Mammary epithelial cell (primary cell): ENCODE measurements at regions of chr10 and their contacts with region 1.

Region 1: GRCh38 chr10:10911471-10911921 is 106.2 kb upstream of the CELF2 start:
- DNase-seq: peak; percentile 77
- H3K4me3 ChIP-seq: peak overlapping the region in 2 of 3 experiments; percentile 12 to 27
- H3K27ac ChIP-seq: no peak overlapping the region
- H3K4me1 ChIP-seq: peaks cover 11% of the 10 kb centered on the region
- H3K27me3 ChIP-seq: no peaks in the 10 kb centered on the region
- CTCF ChIP-seq: no peak

Region 2: DNA sequence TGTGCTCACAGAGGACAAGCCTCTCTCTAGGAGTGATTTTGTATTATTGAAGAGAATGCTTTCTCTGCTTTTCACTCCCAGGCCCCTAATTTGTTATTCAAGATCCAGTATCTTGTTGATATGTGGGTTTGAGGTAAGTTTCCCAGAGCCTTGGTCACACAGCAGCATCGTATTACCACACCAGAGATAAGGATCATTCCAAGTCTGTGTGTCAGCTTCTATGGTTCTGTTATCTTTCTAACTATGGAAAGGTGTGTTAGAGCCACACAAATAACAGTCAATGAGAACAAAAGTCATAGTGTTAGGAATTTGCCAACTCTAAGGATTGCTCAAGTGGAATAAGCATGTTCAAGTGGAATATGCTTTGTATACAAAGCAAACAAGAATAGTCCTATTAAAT is 1648.7 kb before region 1 on chr10:
- CTCF ChIA-PET with region 1: no interaction called
- dilution Hi-C with region 1: no loop called
- in situ Hi-C with region 1: no loop called
- intact Hi-C with region 1: loop called (anchors 5 kb)
- DNase-seq: peak; percentile 8
- H3K4me3 ChIP-seq: no peak overlapping the region
- H3K27ac ChIP-seq: no peak overlapping the region
- H3K4me1 ChIP-seq: no peaks in the 10 kb centered on the region
- H3K27me3 ChIP-seq: peaks cover 3% of the 10 kb centered on the region
- CTCF ChIP-seq: no peak

Region 3: GRCh38 chr10:10786109-10787090 is 125.1 kb before region 1 on chr10:
- CTCF ChIA-PET with region 1: no interaction called
- dilution Hi-C with region 1: no loop called
- in situ Hi-C with region 1: no loop called
- intact Hi-C with region 1: loop called (anchors 2 kb)
- DNase-seq: peak; percentile 71
- H3K4me3 ChIP-seq: no peak overlapping the region
- H3K27ac ChIP-seq: peak overlapping the region; percentile 54
- H3K4me1 ChIP-seq: peaks cover 19% of the 10 kb centered on the region
- H3K27me3 ChIP-seq: no peaks in the 10 kb centered on the region
- CTCF ChIP-seq: no peak

Region 4: DNA sequence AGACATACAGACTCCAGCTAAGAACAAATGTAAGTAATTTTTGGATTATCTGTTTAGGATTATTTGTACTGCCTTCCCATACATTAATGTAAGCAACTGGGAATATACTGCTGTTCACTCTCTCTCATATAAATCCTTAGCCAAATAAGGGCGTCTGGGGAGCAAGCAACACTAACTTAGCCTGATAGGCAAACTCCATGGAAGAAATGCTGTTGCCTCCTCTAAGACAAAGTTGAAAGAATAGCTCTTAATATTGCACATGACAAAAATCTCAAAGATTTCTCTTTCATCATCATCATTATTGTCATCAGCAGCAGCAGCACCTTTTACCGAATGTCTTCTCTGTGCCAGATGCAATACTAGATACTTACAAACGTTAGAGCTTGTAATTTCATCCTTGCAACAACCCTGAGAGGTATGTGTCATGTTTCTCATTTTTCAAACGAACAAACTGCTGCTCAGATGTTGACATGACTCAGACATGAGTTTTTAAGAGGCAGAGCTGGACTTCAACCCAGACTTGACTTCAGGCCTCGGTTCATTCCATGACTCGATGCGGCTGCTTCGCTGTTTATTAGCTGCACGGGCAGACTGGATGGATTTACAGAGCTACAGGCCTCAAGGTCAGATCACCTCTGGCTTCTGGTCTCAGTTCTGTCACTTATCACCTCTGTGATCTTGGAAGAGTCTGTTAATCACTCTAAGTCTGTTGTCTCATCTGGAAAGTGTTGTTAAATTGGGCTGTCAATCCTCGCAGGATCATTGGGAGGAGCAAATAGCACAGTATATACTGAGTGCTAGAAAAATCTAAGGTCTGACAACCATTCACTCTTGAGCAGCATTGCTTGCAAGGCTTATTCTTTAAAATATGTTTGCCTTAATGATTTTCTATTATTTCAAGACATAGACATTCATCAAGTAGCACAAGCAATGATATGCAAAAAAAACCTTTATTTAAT is 20.1 kb before region 1 on chr10:
- CTCF ChIA-PET with region 1: no interaction called
- dilution Hi-C with region 1: no loop called
- in situ Hi-C with region 1: no loop called
- intact Hi-C with region 1: no loop called
- DNase-seq: no peak
- H3K4me3 ChIP-seq: no peak overlapping the region
- H3K27ac ChIP-seq: no peak overlapping the region
- H3K4me1 ChIP-seq: no peaks in the 10 kb centered on the region
- H3K27me3 ChIP-seq: no peaks in the 10 kb centered on the region
- CTCF ChIP-seq: no peak

Region 5: DNA sequence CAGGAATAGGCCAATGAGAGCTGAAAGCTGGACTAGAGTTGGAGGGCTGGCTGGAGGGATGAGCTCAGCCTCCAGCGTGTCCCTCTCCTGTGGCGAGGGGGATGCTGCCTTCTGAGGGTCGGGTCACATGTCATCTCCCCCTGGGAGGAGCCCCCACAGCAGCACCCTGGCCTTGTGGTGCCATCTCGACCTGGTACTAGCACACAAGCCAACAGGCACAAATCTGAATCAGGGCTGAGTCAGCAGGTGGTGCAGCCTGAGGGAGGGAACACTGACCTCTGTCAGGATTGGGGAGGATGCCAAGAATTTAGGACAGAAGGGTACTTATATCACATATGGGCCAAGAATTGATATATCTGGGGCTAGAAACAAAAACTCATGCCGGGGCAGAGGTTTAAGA is 386.6 kb after region 1 on chr10:
- CTCF ChIA-PET with region 1: no interaction called
- dilution Hi-C with region 1: no loop called
- in situ Hi-C with region 1: no loop called
- intact Hi-C with region 1: no loop called
- DNase-seq: peak; percentile 1
- H3K4me3 ChIP-seq: no peak overlapping the region
- H3K27ac ChIP-seq: no peak overlapping the region
- H3K4me1 ChIP-seq: no peaks in the 10 kb centered on the region
- H3K27me3 ChIP-seq: no peaks in the 10 kb centered on the region
- CTCF ChIP-seq: no peak